ENCODE measurements at regions of chr1 and their contacts with region 1.

Region 1: GRCh38 chr1:7218210-7218832 is 433.1 kb downstream of the CAMTA1 start:
- DNase-seq: no peak
- ATAC-seq: peak in 1 of 4 donors; percentile 69
- H3K4me3 ChIP-seq: no peak overlapping the region
- H3K27ac ChIP-seq: no peak overlapping the region
- H3K4me1 ChIP-seq: no peaks in the 10 kb centered on the region
- H3K27me3 ChIP-seq: peaks cover 0 to 3% (median 0%) of the 10 kb centered on the region in 3 donors
- CTCF ChIP-seq: peak; percentile 81

Region 2: GRCh38 chr1:6724516-6725141 is 493.7 kb before region 1 on chr1:
- intact Hi-C with region 1: loop called (anchors 2 to 5 kb)
- DNase-seq: no peak
- ATAC-seq: no peak
- H3K4me3 ChIP-seq: no peak overlapping the region
- H3K27ac ChIP-seq: no peak overlapping the region
- H3K4me1 ChIP-seq: peaks cover 3% of the 10 kb centered on the region
- H3K27me3 ChIP-seq: no peaks in the 10 kb centered on the region
- CTCF ChIP-seq: no peak

Region 3: DNA sequence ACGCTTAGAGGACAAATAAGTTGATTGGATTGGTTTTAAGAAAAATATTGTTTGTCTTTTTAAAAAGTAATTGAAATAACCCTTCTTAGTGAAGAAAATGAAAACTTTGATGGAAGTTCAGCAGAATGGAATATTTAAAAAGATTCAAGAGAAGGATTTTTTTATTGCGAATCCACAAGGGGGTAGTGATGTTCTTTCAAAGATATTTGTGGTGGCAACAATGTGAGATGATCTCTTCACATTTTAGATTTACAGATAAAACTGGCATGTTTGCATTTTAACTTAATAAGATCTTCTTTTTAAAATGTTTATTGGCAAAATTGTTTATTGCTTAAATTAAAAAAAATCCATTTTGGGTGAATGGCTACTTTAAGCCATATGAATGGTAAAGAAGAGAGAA is 424.2 kb before region 1 on chr1:
- intact Hi-C with region 1: loop called (anchors 5 kb)
- DNase-seq: no peak
- ATAC-seq: peak in 1 of 4 donors; percentile 69
- H3K4me3 ChIP-seq: no peak overlapping the region
- H3K27ac ChIP-seq: no peak overlapping the region
- H3K4me1 ChIP-seq: peaks cover 27% of the 10 kb centered on the region
- H3K27me3 ChIP-seq: no peaks in the 10 kb centered on the region
- CTCF ChIP-seq: peak; percentile 53

Region 4: DNA sequence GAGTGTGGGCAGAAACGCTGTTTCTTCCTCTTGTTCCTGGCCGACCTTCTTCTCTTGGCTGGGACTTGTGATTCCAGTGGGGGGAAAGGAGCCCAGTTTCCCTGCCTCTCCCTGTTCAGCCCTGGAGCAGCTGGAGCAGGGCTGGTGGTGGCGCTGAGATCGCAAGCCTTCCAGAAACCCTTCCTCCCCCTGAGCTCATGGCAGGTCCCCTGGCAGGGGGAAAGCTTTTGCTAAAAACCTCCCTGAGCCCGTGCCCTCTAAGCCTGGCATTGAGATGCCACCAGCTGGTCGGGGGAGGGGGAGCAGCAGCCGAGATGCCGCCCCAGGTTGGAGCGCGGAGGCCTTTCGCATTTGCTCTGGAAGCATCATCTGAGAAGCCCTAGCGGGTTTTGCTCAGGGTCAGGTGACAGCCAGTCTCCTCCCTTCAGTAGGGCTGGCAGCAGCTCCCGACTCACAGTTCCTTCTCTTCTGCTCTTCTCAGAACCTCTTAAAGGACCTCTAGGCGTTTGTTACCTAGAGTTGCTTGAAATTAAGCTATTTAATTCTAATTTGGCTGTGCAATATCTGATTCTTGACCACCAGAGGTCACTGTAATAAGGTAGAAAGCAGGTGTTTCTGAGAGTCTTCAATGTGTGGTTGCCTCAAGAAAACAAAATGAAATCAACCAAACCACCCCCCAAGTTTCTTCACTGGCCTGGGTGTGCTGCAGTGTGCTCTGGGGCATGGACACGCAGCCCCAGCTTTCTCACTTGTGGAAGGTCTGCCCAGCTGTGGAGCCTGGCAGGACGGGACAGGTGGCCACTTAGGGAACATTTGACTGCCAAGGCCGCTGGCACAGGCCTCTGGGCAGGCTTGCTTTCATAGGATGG is 175.8 kb before region 1 on chr1:
- intact Hi-C with region 1: loop called (anchors 5 kb)
- DNase-seq: no peak
- ATAC-seq: peak in 2 of 4 donors; percentile 64 to 65
- H3K4me3 ChIP-seq: peak overlapping the region; percentile 11
- H3K27ac ChIP-seq: no peak overlapping the region
- H3K4me1 ChIP-seq: peaks cover 7% of the 10 kb centered on the region
- H3K27me3 ChIP-seq: peaks cover 0 to 14% (median 4%) of the 10 kb centered on the region in 3 donors
- CTCF ChIP-seq: peak; percentile 50

Region 5: GRCh38 chr1:7070389-7071029 is 147.8 kb before region 1 on chr1:
- intact Hi-C with region 1: loop called in 1 of 2 experiments (anchors 10 kb)
- DNase-seq: peak; percentile 48 to 73
- ATAC-seq: peak; percentile 67 to 89 (median 72)
- H3K4me3 ChIP-seq: peak overlapping the region; percentile 52
- H3K27ac ChIP-seq: no peak overlapping the region
- H3K4me1 ChIP-seq: peaks cover 6% of the 10 kb centered on the region
- H3K27me3 ChIP-seq: peaks cover 0 to 4% (median 0%) of the 10 kb centered on the region in 3 donors
- CTCF ChIP-seq: peak; percentile 84

Measured in psoas muscle (tissue), 8 donors.